Aorta (tissue), 5 donors: ENCODE measurements at regions of chr11 and their contacts with region 1.

Region 1: DNA sequence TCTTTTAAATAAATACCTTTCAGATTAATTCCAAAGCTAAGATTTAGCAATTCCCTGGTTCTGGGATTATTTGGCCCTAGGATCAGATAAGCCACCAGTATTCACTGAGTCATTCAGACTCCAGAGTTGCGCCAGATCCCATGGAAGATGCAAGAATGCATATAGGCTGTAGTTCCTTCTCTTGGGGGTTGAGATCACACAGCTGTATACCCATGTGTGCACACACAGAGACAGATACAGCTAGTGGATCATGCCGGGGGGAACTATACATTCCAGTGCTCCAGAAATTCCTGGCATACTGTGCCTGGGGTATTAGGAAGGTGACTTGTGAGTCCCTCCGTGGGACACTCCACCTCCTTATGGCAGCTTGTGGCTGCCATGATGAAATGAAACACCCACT is 75.4 kb downstream of the ZBTB16 start:
- DNase-seq: peak in 1 of 2 donors; percentile 51
- ATAC-seq: no peak
- H3K4me3 ChIP-seq: no peak overlapping the region
- H3K27ac ChIP-seq: peak overlapping the region; percentile 50 to 94
- H3K4me1 ChIP-seq: peaks cover 21 to 26% of the 10 kb centered on the region in 2 donors
- H3K27me3 ChIP-seq: no peaks in the 10 kb centered on the region

Region 2: GRCh38 chr11:114115451-114115928 is 19.4 kb before region 1 on chr11:
- intact Hi-C with region 1: no loop called
- DNase-seq: no peak
- ATAC-seq: no peak
- H3K4me3 ChIP-seq: no peak overlapping the region
- H3K27ac ChIP-seq: no peak overlapping the region
- H3K4me1 ChIP-seq: peaks cover 7 to 13% of the 10 kb centered on the region in 2 donors
- H3K27me3 ChIP-seq: no peaks in the 10 kb centered on the region

Region 3: DNA sequence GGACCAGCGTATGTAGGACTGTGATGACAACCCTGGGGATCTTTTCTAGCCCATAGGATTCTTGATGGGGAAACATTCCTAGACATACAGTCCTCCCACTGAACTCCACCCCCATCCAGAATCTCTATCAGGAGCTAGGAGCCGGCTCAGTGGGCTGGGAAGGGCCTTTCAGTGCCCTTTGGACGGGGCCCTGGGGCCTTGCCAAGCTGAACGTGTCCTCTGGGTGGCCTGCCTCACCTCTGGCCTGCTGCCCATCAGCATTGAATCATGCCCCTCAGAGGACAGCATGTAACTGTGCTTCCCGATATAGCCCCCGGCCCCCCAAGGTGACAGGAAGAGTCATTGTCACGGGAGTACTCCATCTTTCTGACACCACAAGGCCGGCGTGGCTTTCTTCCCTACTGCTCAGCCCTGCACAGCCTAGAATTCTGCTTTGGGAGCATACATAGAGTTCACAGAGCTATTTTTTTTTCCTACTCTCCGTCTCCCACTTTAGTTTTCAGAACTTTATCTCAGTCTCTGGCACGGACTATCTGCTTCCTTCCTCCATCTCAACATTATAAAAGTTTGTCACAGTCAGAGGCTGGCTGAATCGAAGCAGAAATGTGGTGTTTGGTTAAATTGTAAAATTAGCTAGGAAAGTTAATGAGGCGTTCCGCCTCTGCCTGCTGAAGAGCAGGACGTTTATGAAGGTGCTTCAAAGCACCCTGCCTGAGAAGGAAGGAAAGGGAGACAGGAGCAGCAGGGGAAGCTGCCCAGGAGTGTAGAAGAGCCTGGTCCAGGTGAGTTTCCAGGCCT is 36.6 kb after region 1 on chr11:
- intact Hi-C with region 1: loop called (anchors 5 kb)
- DNase-seq: peak; percentile 84 to 96
- ATAC-seq: peak; percentile 78
- H3K4me3 ChIP-seq: no peak overlapping the region
- H3K27ac ChIP-seq: peak overlapping the region; percentile 83 to 99
- H3K4me1 ChIP-seq: peaks cover 30 to 33% of the 10 kb centered on the region in 2 donors
- H3K27me3 ChIP-seq: no peaks in the 10 kb centered on the region

Region 4: GRCh38 chr11:114180301-114181055 is 45.6 kb after region 1 on chr11:
- intact Hi-C with region 1: loop called in 1 of 2 experiments (anchors 5 kb)
- DNase-seq: peak; percentile 69 to 79
- ATAC-seq: peak; percentile 54
- H3K4me3 ChIP-seq: peak overlapping the region in 1 of 2 donors; percentile 66
- H3K27ac ChIP-seq: peak overlapping the region; percentile 94 to 99
- H3K4me1 ChIP-seq: peaks cover 3 to 5% of the 10 kb centered on the region in 2 donors
- H3K27me3 ChIP-seq: no peaks in the 10 kb centered on the region